Sciatic nerve (tissue), 2 donors: ENCODE measurements at regions of chr20 and their contacts with region 1.

Region 1: DNA sequence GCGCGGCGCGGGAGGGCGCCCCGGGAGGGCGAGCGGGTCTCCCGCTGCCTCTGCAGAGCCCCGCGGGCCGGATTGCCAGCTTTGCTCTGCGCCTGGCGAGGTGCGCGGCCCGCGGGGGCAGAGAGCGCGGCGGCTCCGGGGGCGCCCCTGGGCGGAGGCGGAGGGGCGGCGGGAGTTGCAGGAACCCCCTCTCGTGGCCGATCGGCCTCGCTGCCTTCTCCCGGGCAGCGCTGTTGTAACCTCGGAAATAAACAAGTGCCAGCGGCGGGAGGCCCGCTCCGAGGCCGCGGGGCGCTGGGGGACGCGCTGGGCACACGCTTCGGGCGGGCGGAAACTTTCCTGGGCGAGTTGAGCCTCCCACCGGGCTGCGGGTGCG is 1.2 kb downstream of the CDH4 start:
- DNase-seq: no peak
- ATAC-seq: peak; percentile 35

Region 2: GRCh38 chr20:63196768-63197470 is 1943.7 kb after region 1 on chr20:
- intact Hi-C with region 1: loop called (anchors 5 kb)
- DNase-seq: no peak
- ATAC-seq: no peak